ENCODE measurements at regions of chr14 and their contacts with region 1.

Region 1: GRCh38 chr14:32576088-32576795 is 247.1 kb downstream of the AKAP6 start:
- DNase-seq: peak; percentile 51
- H3K4me3 Mint-ChIP-seq: no peak overlapping the region
- H3K27ac Mint-ChIP-seq: no peak overlapping the region
- H3K4me1 Mint-ChIP-seq: peaks cover 10% of the 10 kb centered on the region
- H3K27me3 Mint-ChIP-seq: peaks cover 37% of the 10 kb centered on the region
- CTCF ChIP-seq: peak; percentile 70

Region 2: GRCh38 chr14:32702562-32702961 is 126.3 kb after region 1 on chr14:
- CTCF ChIA-PET with region 1: no interaction called
- intact Hi-C with region 1: no loop called
- DNase-seq: no peak
- H3K4me3 Mint-ChIP-seq: no peak overlapping the region
- H3K27ac Mint-ChIP-seq: no peak overlapping the region
- H3K4me1 Mint-ChIP-seq: no peaks in the 10 kb centered on the region
- H3K27me3 Mint-ChIP-seq: peaks cover 14% of the 10 kb centered on the region
- CTCF ChIP-seq: no peak

Region 3: DNA sequence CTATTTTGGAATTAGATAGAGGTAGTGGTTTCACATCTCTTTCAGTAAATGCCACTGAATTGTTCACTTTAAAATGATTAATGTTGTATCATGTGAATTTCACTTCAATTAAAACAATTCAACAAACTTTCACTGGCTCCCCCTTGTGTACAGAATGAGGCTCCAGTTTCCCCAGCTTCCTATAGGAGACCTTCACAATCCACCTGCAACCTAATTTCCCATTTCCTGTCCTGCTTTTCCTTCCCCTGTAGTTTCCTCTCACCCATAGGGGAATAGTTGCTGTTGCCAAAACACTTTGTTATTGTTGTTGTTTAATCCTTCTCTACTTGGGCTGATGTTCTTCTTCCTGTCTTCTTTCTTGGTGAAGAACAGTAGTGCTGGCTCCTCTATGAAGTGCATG is 422.2 kb after region 1 on chr14:
- CTCF ChIA-PET with region 1: no interaction called
- intact Hi-C with region 1: loop called (anchors 10 kb)
- DNase-seq: peak; percentile 1
- H3K4me3 Mint-ChIP-seq: no peak overlapping the region
- H3K27ac Mint-ChIP-seq: no peak overlapping the region
- H3K4me1 Mint-ChIP-seq: no peaks in the 10 kb centered on the region
- H3K27me3 Mint-ChIP-seq: no peaks in the 10 kb centered on the region
- CTCF ChIP-seq: no peak

Region 4: GRCh38 chr14:33432407-33433023 is 856.3 kb after region 1 on chr14:
- CTCF ChIA-PET with region 1: no interaction called
- intact Hi-C with region 1: loop called (anchors 1 kb)
- DNase-seq: no peak
- H3K4me3 Mint-ChIP-seq: no peak overlapping the region
- H3K27ac Mint-ChIP-seq: no peak overlapping the region
- H3K4me1 Mint-ChIP-seq: no peaks in the 10 kb centered on the region
- H3K27me3 Mint-ChIP-seq: no peaks in the 10 kb centered on the region
- CTCF ChIP-seq: no peak